Activated CD4-positive, alpha-beta T cell treated with anti-CD3 and anti-CD28 coated beads for 36 hours (primary cell): ENCODE measurements at regions of chr10 and their contacts with region 1.

Region 1: GRCh38 chr10:124916585-124917427 is 25.1 kb upstream of the ZRANB1 start:
- DNase-seq: peak; percentile 99
- ATAC-seq: peak; percentile 95
- H3K4me3 Mint-ChIP-seq: peak overlapping the region; percentile 92
- H3K27ac Mint-ChIP-seq: peak overlapping the region; percentile 92
- H3K4me1 Mint-ChIP-seq: peaks cover 38% of the 10 kb centered on the region
- H3K27me3 Mint-ChIP-seq: no peaks in the 10 kb centered on the region

Region 2: GRCh38 chr10:124418726-124419501 is 497.9 kb before region 1 on chr10 and contains the start of gene OAT:
- CTCF ChIA-PET with region 1: no interaction called
- POLR2A ChIA-PET with region 1: no interaction called
- intact Hi-C with region 1: loop called in 1 of 2 experiments (anchors 1 kb)
- DNase-seq: peak; percentile 99
- ATAC-seq: peak; percentile 98
- H3K4me3 Mint-ChIP-seq: peak within 1 kb of the TSS; percentile 78
- H3K27ac Mint-ChIP-seq: peak within 1 kb of the TSS; percentile 21
- H3K4me1 Mint-ChIP-seq: peaks cover 16% of the 10 kb centered on the region
- H3K27me3 Mint-ChIP-seq: no peaks in the 10 kb centered on the region
- total RNA-seq, gene OAT: 36.5 to 39.6 TPM

Region 3: GRCh38 chr10:124453960-124454610 is 462.7 kb before region 1 on chr10:
- CTCF ChIA-PET with region 1: no interaction called
- POLR2A ChIA-PET with region 1: no interaction called
- intact Hi-C with region 1: no loop called
- DNase-seq: no peak
- ATAC-seq: no peak
- H3K4me3 Mint-ChIP-seq: no peak overlapping the region
- H3K27ac Mint-ChIP-seq: no peak overlapping the region
- H3K4me1 Mint-ChIP-seq: peaks cover 7% of the 10 kb centered on the region
- H3K27me3 Mint-ChIP-seq: peaks cover 58% of the 10 kb centered on the region

Region 4: DNA sequence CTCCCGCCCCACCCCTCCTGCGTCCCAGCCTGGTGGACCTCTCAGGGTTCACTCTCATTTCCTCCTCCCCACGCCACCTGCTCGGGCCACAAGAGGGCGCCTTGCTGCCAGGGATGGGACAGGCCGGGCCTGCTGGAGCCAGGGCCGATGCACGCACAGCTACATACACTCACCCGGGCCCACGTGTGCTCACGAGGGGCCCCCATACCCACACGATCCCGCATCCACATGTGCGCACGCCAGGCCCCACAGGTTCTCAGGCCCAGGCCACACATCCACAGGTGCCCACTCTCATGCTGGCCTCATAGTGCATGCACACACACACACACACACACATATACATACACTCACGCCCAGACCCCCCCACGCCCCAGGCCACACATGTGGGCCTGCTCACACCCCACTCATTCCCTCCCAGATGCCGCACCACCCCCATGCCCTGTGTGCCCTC is 386.6 kb before region 1 on chr10:
- CTCF ChIA-PET with region 1: no interaction called
- POLR2A ChIA-PET with region 1: no interaction called
- intact Hi-C with region 1: loop called in 1 of 2 experiments (anchors 2 kb)
- DNase-seq: peak; percentile 92
- ATAC-seq: peak; percentile 97
- H3K4me3 Mint-ChIP-seq: no peak overlapping the region
- H3K27ac Mint-ChIP-seq: no peak overlapping the region
- H3K4me1 Mint-ChIP-seq: peaks cover 4% of the 10 kb centered on the region
- H3K27me3 Mint-ChIP-seq: no peaks in the 10 kb centered on the region

Region 5: DNA sequence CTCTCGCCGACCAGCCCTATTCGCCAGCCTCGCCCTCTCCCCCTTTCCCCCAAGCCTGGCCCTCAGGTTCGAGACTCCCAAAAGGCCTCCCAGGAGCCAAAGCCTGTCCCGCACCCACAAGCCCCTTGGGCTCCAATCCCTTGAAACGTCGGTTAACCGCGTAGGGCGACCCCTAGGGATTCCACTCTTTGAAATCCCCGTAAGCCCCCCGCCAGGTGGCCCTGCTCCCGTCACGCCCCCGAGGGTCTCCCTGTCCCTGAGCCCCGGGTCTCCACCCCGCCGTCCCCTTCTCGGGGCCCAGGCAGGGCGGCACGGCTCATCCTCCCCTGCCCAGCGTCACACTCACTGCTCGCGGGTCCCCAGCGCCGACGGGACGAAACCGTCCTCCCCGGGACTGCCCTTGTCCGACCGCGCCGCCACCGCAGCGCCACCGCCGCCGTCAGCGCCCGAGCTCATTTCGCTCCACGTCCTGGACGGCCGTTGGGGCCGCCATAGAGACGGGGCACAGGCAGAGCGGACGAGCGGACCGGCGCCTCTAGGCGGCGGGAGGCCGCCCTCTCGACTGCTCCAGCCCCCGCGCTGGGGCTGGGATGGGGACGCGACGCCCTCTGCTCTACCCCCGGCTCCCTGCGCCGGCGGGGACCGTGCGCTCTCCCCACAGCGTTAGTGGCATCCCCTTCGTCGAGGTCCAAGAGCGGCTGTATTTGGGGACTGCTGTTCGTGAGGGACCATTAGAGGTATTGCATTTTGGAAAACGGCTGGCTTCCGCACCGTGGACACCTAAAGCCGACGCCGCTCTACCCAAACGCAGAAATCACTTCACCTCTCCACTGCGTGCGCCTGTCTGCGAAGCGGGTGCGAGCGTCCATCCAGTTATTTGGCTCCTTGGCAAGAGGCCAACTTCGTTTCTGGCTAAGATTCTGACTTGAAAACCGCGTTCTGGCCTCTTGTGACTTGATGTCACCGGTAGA is 125.1 kb before region 1 on chr10 and contains the start of gene EEF1AKMT2:
- CTCF ChIA-PET with region 1: no interaction called
- POLR2A ChIA-PET with region 1: no interaction called
- intact Hi-C with region 1: loop called in 1 of 2 experiments (anchors 1 kb)
- DNase-seq: peak; percentile 91
- ATAC-seq: peak; percentile 93
- H3K4me3 Mint-ChIP-seq: peak within 1 kb of the TSS; percentile 98
- H3K27ac Mint-ChIP-seq: peak within 1 kb of the TSS; percentile 90
- H3K4me1 Mint-ChIP-seq: peaks cover 16% of the 10 kb centered on the region
- H3K27me3 Mint-ChIP-seq: no peaks in the 10 kb centered on the region
- total RNA-seq, gene EEF1AKMT2: 21.4 to 28.4 TPM

Region 6: GRCh38 chr10:124860426-124860825 is 56.4 kb before region 1 on chr10:
- CTCF ChIA-PET with region 1: no interaction called
- POLR2A ChIA-PET with region 1: no interaction called
- intact Hi-C with region 1: no loop called
- DNase-seq: no peak
- ATAC-seq: no peak
- H3K4me3 Mint-ChIP-seq: no peak overlapping the region
- H3K27ac Mint-ChIP-seq: no peak overlapping the region
- H3K4me1 Mint-ChIP-seq: no peaks in the 10 kb centered on the region
- H3K27me3 Mint-ChIP-seq: no peaks in the 10 kb centered on the region

Region 7: GRCh38 chr10:124941823-124942222 is 25.0 kb after region 1 on chr10 and contains the start of gene ZRANB1:
- CTCF ChIA-PET with region 1: no interaction called
- POLR2A ChIA-PET with region 1: no interaction called
- intact Hi-C with region 1: loop called in 1 of 2 experiments (anchors 2 kb)
- DNase-seq: no peak
- ATAC-seq: no peak
- H3K4me3 Mint-ChIP-seq: no peak within 1 kb of the TSS
- H3K27ac Mint-ChIP-seq: peak within 1 kb of the TSS; percentile 15
- H3K4me1 Mint-ChIP-seq: peaks cover 46% of the 10 kb centered on the region
- H3K27me3 Mint-ChIP-seq: no peaks in the 10 kb centered on the region
- total RNA-seq, gene ZRANB1: 8.4 to 10.4 TPM

Region 8: GRCh38 chr10:125719146-125720001 is 802.6 kb after region 1 on chr10 and contains the start of gene EDRF1:
- CTCF ChIA-PET with region 1: no interaction called
- POLR2A ChIA-PET with region 1: no interaction called
- intact Hi-C with region 1: loop called (anchors 1 to 2 kb)
- DNase-seq: peak; percentile 99
- ATAC-seq: peak; percentile 97
- H3K4me3 Mint-ChIP-seq: peak within 1 kb of the TSS; percentile 82
- H3K27ac Mint-ChIP-seq: peak within 1 kb of the TSS; percentile 92
- H3K4me1 Mint-ChIP-seq: peaks cover 26% of the 10 kb centered on the region
- H3K27me3 Mint-ChIP-seq: no peaks in the 10 kb centered on the region
- total RNA-seq, gene EDRF1: 29.6 to 30.8 TPM